ENCODE measurements at regions of chr11 and their contacts with region 1.

Region 1: DNA sequence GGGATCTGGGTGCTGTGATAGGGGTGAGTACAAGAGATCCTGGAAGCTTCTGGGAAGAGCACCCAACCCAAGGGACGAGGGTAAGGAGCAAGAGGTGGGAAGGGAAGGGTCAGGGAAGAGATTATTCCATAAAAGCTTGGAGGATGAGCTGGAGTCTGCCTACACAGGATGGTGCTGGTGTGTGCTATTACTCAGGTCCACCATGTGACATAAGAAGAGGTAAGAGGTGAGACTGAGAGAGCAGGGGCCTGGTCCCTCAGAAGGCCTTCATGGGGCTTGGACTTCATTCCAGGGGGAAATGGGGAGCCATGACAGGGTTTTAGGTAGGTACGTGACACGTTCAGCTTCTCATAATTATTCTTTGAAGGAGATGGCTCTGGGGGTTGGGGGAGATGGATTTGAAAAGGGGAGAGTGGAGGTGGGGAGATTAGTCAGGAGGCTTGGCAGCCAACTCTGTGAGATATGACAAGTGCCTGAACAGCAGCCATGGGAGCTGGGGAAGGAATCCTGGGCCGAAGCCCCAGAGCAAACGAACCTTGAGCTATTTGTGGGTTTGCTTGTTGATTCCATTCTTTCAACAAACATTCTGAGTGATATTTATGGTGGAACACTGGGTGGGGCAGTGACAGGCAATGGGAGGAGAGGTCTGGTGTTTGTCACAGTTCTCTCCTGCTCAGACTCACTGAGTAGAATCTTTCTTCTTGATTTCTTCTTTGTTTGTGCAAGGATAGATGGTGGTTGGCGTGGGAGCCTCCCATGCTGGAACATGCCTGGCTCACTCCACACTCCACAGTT is 11.2 kb upstream of the NCAM1 start:
- DNase-seq: peak; percentile 39 to 53
- ATAC-seq: peak; percentile 68 to 96 (median 92)
- H3K4me3 ChIP-seq: no peak overlapping the region
- H3K27ac ChIP-seq: peak overlapping the region; percentile 11 to 73 (median 62)
- H3K4me1 ChIP-seq: peaks cover 0 to 14% (median 0%) of the 10 kb centered on the region in 9 donors
- H3K27me3 ChIP-seq: peaks cover 0 to 6% (median 0%) of the 10 kb centered on the region in 7 donors
- CTCF ChIP-seq: no peak

Region 2: DNA sequence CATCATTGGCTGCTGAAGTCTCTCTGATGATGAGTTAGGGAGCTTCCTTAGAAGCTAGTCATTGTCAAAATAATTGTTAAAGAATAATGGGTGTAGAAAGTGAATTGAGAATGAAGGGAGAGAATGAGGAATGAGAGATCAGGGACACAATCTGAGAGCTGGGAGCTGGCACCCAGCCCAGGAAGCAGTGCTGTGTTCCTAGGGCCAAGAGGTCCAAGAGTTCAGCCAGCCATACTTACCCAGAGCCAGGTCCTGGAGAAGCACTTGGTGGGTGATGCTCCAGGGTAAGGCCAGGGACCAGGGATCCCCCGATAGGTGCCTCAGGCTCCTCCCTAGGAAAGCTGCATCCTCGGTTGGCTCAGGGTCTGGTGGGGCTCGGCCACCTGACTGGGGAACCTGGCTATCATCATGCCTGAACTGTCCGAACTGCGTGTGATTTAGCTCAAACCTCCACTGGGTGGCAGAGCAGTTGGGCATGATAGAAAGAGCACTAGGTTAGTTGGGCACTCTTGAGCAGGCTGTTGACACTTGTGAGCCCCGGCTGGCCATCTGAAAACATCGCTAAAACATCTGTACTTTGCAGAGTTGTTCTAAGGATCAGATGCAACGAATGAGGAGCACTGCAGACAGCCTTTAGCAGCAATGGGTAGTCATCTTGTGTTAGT is 112.7 kb before region 1 on chr11:
- intact Hi-C with region 1: loop called in 2 of 10 experiments (anchors 5 to 10 kb)
- DNase-seq: peak; percentile 10 to 45
- ATAC-seq: peak; percentile 49 to 65 (median 63)
- H3K4me3 ChIP-seq: no peak overlapping the region
- H3K27ac ChIP-seq: peak overlapping the region in 1 of 10 donors; percentile 19
- H3K4me1 ChIP-seq: peaks cover 0 to 24% (median 10%) of the 10 kb centered on the region in 9 donors
- H3K27me3 ChIP-seq: no peaks in the 10 kb centered on the region
- CTCF ChIP-seq: peak in 7 of 9 donors; percentile 25 to 58 (median 43)

Region 3: DNA sequence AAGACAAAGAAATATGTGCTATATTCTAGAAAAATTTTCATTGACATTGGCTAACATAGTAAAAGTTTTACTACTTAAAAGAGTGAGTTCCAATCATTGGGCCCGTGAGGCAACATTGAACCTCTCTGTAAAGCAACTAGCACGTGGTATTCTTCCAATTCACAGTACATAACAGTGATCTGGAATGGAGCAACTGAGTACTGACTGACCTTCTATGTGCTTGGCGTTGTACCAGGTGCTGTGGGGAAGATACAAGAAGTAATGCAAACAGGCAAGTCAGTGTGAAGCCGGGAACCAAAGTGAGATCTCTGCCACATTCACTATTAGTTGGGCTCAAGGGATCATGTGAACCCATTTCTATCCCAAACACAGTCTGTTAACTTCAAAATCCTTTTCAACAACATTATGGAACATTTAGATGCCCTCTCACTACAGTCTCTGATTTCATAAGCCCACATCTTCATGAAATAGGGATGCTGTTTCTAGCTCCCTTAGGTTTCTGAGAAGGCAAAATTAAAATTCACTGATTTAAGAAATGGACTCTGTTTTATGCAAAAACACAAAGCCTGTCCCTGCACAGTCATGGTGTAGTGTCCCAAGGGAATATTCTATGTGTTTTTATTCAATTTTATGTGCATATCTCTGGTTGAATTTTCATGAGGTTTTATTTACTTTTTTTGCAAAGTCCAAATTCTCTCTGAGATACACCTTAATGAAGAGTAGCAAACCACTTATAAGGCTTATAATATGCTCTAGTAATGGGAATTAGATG is 50.6 kb before region 1 on chr11:
- intact Hi-C with region 1: no loop called
- DNase-seq: no peak
- ATAC-seq: peak in 3 of 8 donors; percentile 43 to 71 (median 63)
- H3K4me3 ChIP-seq: no peak overlapping the region
- H3K27ac ChIP-seq: no peak overlapping the region
- H3K4me1 ChIP-seq: peaks cover 0 to 21% (median 9%) of the 10 kb centered on the region in 9 donors
- H3K27me3 ChIP-seq: no peaks in the 10 kb centered on the region
- CTCF ChIP-seq: no peak